HepG2 (cell line): ENCODE measurements at regions of chr7 and their contacts with region 1.

Region 1: DNA sequence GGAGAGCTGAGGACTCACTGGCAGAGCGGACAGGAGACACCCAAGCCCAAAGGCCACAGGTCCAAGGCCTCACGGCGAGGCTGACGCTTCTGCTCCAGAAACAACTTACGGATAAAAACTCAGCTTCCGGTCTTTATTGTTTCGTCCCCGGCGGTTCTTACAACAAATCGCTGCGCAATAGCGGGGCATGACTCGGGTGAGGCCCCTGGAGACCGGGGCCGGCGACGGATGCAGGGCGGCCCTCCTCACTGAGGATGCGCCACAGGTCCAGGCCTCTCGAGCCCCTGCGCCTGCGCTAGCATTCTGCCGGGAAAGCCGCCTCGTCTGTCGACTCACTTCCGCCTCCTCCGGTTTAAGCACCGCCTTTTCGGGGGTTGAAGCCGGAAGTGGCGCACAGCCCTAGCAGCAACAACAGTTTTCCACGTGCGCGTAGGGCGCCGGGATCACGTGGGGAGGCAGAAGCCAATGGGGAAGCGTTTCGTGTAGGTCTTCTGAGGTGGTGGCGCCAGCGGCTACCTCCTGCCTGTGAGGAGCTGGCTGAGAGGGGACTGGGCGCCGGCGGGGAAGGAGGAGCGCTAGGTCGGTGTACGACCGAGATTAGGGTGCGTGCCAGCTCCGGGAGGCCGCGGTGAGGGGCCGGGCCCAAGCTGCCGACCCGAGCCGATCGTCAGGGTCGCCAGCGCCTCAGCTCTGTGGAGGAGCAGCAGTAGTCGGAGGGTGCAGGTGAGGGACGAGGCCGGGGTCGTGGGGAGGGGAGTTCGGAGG is at the starts of genes DNAJB9 and THAP5:
- DNase-seq: peak; percentile 98
- ATAC-seq: peak; percentile 96
- H3K4me3 ChIP-seq: peak within 1 kb of the TSS; percentile 77 to 99 (median 97)
- H3K27ac ChIP-seq: peak within 1 kb of the TSS; percentile 95
- H3K4me1 ChIP-seq: peaks cover 47% of the 10 kb centered on the region
- H3K27me3 ChIP-seq: no peaks in the 10 kb centered on the region; a peak in 1 of 5 replicates
- CTCF ChIP-seq: 0 out of 2 replicates have a peak, but pooled peaks have one; percentile 30
- EP300 ChIP-seq: 0 out of 4 replicates have a peak, but pooled peaks of 1 of the 2 experiments have one; percentile 16
- POLR2A ChIP-seq: peak; percentile 92 to 93
- RAD21 ChIP-seq: no peak; the same call in 1 of the 2 replicates
- total RNA-seq, gene DNAJB9: 10.8 and 16.4 TPM in 2 replicates
- total RNA-seq, gene THAP5: 11.8 and 17.1 TPM in 2 replicates

Region 2: DNA sequence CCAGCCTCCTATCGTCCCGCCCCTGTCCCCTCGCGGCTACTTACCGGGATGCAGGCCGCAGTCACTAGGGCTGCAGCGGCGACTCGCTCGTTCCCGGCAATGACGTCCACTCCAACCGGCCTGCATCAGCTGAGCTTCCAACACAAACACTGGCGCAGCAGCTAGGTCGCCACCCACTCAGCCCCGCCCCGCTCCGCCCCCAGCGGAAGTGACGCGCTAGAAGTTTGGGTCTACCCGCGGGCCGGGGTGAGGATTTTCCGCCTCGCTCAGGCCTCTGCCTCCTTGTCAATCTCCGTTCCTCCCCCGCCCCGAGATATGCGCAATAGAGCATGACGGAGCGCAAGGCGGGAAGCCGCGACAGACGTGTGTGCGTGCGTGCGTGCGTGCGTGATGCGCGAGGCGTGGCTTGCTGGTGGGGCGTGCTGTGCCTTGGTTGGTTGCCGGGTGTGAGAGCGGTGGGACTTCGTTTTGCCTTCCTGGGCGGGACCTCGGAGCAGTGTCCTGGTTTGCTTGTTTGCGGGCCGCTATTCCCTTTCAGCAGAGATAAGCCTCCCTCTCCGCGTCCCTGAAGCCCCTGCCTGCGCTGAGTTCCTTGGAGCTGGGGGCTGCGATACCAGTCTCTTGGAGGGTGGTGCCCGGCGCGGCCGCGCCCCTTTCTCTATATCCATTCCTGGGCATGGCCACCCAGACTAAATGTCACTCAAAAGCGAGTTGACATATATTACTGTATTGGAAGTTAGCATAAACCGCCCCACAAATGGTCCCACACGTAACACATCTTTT is 43.4 kb before region 1 on chr7 and contains the start of gene PNPLA8:
- CTCF ChIA-PET with region 1: no interaction called
- POLR2A ChIA-PET with region 1: interaction called, 49 read pairs
- in situ Hi-C with region 1: no loop called
- intact Hi-C with region 1: loop called (anchors 1 kb)
- DNase-seq: peak; percentile 98
- ATAC-seq: peak; percentile 95
- H3K4me3 ChIP-seq: peak within 1 kb of the TSS; percentile 65 to 90 (median 83)
- H3K27ac ChIP-seq: peak within 1 kb of the TSS; percentile 82
- H3K4me1 ChIP-seq: peaks cover 34% of the 10 kb centered on the region
- H3K27me3 ChIP-seq: no peaks in the 10 kb centered on the region; a peak in 1 of 5 replicates
- CTCF ChIP-seq: no peak
- EP300 ChIP-seq: no peak
- POLR2A ChIP-seq: peak; percentile 64 to 80
- RAD21 ChIP-seq: no peak
- total RNA-seq, gene PNPLA8: 11.4 and 15.6 TPM in 2 replicates

Region 3: GRCh38 chr7:108598153-108598552 is 28.6 kb after region 1 on chr7:
- CTCF ChIA-PET with region 1: no interaction called
- POLR2A ChIA-PET with region 1: no interaction called
- in situ Hi-C with region 1: no loop called
- intact Hi-C with region 1: no loop called
- DNase-seq: no peak
- ATAC-seq: no peak
- H3K4me3 ChIP-seq: no peak overlapping the region
- H3K27ac ChIP-seq: no peak overlapping the region
- H3K4me1 ChIP-seq: no peaks in the 10 kb centered on the region
- H3K27me3 ChIP-seq: peaks cover 3 to 20% of the 10 kb centered on the region in 2 experiments; a peak in 3 of 5 replicates
- CTCF ChIP-seq: no peak
- EP300 ChIP-seq: no peak
- POLR2A ChIP-seq: no peak
- RAD21 ChIP-seq: no peak